ENCODE measurements at regions of chr11 and their contacts with region 1.

Region 1: GRCh38 chr11:134139873-134140331 is 71.0 kb downstream of the JAM3 start:
- DNase-seq: peak; percentile 37 to 39
- ATAC-seq: peak; percentile 84

Region 2: GRCh38 chr11:133927690-133928627 is 211.9 kb before region 1 on chr11:
- intact Hi-C with region 1: loop called (anchors 10 kb)
- DNase-seq: peak; percentile 49 to 76
- ATAC-seq: peak; percentile 94

Region 3: DNA sequence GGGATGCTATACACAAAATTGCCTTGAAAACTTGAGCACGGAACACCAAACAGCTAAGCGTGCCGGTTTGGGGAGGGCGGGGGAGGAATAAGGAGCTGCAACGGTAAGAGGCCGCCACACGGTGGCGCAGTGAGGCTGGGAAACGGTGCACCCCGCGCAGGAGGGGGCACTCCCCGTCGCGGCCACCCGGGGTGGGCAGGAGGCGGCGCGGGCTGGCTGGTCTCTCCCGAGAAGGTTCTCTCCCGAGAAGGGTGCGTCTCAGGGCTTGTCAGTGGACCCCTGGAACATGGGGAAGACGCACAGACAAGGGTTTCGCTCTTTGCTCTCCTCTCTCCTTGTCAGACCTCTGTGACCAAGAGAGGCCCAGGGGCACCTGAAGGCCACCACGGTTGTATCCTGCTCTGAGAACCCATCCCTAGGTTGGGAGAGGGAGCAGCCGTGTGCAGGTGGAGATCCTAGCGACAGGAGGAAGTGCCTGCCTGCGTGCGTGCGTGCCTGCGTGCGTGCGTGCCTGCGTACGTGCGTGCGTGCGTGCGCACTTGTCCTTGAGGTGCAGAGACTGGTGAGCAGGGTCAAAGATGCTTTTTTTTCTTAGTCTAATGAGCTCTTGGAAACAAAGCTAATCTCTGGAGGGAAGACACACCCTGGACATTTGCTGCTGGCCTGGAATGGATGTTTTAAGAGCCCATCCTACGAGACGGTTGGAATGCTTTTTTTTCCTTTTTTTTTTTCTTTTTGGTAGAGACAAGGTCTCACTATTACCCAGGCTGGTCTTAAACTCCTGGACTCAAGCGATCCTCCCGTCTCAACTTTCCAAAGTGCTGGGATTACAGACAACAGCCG is 89.1 kb before region 1 on chr11:
- intact Hi-C with region 1: loop called (anchors 2 to 10 kb)
- DNase-seq: peak; percentile 84 to 87
- ATAC-seq: peak; percentile 99

Region 4: DNA sequence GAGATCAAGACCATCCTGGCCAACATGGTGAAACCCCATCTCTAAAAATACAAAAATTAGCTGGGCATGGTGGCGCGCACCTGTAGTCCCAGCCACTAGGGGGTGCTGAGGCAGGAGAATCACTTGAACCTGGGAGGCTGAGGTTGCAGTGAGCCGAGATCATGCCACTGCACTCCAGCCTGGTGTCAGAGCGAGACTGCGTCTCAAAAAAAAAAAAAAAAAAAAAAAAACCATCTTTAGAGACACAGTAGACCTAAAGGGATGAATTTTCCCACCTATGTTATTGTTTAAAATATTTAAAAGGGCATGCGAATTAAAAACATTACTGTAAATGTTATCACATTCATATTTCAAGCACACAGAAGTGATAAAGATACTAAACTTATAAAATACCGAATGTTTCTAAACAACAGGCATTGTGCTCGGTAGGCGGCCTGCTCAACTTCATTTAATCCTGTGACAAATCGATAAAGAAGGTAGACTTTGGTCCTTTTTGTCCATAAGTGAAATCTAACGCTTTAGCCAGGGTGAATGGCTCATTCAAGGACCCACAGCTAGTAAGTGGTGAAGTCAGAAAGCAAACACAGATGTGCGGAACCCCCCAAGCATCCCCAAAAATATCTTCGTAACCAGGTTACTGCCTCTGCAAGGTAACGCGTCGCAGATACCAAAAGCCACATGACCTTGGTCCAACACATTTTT is 67.8 kb after region 1 on chr11:
- intact Hi-C with region 1: no loop called
- DNase-seq: peak; percentile 31 to 62
- ATAC-seq: no peak

Measured in left colon (tissue), 2 donors.